GM12878 (cell line): ENCODE measurements at regions of chr1 and their contacts with region 1.

Region 1: DNA sequence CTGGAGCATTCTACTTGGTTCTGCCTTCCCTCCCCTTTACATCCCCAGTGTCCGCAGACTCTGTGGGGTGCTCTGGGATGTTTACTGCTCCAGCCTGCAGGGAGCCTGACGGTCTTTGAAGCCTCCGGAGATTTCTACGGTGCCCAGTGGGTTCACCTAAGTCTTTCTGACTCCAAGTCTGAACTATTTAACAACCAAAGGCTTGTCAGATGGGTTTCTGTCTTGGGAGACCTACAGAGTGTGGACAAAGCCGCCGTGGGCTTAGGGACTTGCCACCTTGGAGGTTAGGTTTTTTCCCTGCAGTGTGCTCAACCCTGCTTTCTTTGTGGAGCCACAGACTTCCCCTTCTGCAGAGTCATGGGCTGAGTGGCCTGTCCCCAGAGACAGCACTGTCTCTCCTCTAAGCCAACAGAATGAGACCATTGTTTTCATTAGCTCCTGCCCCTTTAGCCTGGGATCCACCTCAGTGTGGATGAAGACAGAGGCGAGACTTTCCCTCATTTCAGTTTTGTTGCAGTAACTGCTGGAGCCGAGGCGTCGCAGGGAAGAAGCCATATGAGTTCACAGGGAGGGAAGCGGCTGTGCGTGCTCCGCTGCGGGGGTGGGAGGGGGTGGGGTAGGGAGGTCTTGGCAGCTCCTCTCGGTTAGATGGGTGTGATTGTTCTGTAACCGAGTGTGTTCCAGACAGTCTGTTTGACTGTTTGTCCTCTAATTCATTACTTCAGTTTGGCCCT is 120.7 kb downstream of the CNIH3 start:
- DNase-seq: peak; percentile 93
- ATAC-seq: peak; percentile 61
- H3K4me3 ChIP-seq: no peak overlapping the region
- H3K27ac ChIP-seq: peak overlapping the region; percentile 49
- H3K4me1 ChIP-seq: peaks cover 77% of the 10 kb centered on the region
- H3K27me3 ChIP-seq: no peaks in the 10 kb centered on the region
- CTCF ChIP-seq: no peak
- EP300 ChIP-seq: peak; percentile 88 to 90; a peak in 3 of 4 replicates
- POLR2A ChIP-seq: no peak
- RAD21 ChIP-seq: no peak

Region 2: GRCh38 chr1:224447251-224447650 is 289.5 kb before region 1 on chr1:
- CTCF ChIA-PET with region 1: no interaction called
- POLR2A ChIA-PET with region 1: no interaction called
- RAD21 ChIA-PET with region 1: no interaction called
- SMC1A ChIA-PET with region 1: no interaction called
- in situ Hi-C with region 1: no loop called
- intact Hi-C with region 1: no loop called
- DNase-seq: no peak
- ATAC-seq: no peak
- H3K4me3 ChIP-seq: no peak overlapping the region
- H3K27ac ChIP-seq: no peak overlapping the region
- H3K4me1 ChIP-seq: no peaks in the 10 kb centered on the region
- H3K27me3 ChIP-seq: no peaks in the 10 kb centered on the region
- CTCF ChIP-seq: no peak
- EP300 ChIP-seq: no peak
- POLR2A ChIP-seq: no peak
- RAD21 ChIP-seq: no peak

Region 3: DNA sequence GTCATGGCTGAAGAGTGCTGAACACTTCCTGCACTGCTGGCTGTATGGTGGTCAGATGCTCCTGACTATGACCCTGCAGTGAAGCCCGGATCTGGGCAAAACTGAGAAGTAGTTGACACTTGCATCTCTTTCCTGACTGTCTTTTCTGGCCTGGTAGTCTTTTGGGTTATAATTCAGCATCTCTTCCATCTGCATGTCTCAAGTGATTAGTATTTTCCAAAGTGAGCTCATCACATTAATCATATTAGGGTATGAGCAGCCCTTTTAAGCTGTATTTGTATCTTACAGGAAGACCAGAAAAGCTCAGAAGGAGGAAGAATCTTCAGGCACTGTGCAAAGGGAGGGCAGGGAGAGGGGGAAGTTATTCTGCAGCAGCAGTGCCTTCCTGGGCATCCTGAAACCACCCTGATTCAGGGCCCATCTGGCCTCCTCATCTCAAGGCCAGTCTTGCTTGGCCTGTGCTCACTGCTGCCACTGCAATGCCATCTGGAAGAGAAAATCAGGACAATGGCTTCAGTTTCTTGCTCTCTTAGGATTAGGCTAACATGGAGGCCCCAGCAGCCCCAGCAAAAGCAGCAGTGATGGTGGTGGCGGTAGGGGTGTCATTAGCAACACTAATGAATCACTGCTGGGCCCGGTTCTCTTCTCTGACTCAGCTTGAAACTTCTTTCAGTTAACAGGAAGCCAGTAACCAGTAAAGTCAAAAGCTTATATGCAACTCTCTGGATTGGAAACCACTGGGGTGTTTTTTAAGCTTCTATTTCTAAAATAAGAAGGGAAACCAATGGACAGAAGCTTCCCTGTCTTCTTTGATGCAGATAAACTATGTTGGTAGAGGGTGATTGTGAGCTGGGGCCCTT is 238.8 kb before region 1 on chr1:
- CTCF ChIA-PET with region 1: interaction called, 6 read pairs
- POLR2A ChIA-PET with region 1: no interaction called
- RAD21 ChIA-PET with region 1: interaction called, 10 read pairs
- SMC1A ChIA-PET with region 1: interaction called, 5 read pairs
- in situ Hi-C with region 1: no loop called
- intact Hi-C with region 1: loop called (anchors 5 kb)
- DNase-seq: peak; percentile 80
- ATAC-seq: peak; percentile 98
- H3K4me3 ChIP-seq: peak overlapping the region; percentile 28; the same call in 1 of the 2 replicates
- H3K27ac ChIP-seq: peak overlapping the region; percentile 92
- H3K4me1 ChIP-seq: peaks cover 37% of the 10 kb centered on the region
- H3K27me3 ChIP-seq: no peaks in the 10 kb centered on the region
- CTCF ChIP-seq: no peak
- EP300 ChIP-seq: peak in 1 of 2 experiments; percentile 82; a peak in 2 of 4 replicates
- POLR2A ChIP-seq: peak; percentile 54
- RAD21 ChIP-seq: no peak

Region 4: GRCh38 chr1:224592636-224593582 is 143.9 kb before region 1 on chr1:
- CTCF ChIA-PET with region 1: no interaction called
- POLR2A ChIA-PET with region 1: no interaction called
- RAD21 ChIA-PET with region 1: no interaction called
- SMC1A ChIA-PET with region 1: no interaction called
- in situ Hi-C with region 1: no loop called
- intact Hi-C with region 1: no loop called
- DNase-seq: no peak
- ATAC-seq: peak; percentile 81
- H3K4me3 ChIP-seq: no peak overlapping the region
- H3K27ac ChIP-seq: no peak overlapping the region
- H3K4me1 ChIP-seq: no peaks in the 10 kb centered on the region
- H3K27me3 ChIP-seq: no peaks in the 10 kb centered on the region
- CTCF ChIP-seq: no peak
- EP300 ChIP-seq: no peak
- POLR2A ChIP-seq: no peak
- RAD21 ChIP-seq: no peak

Region 5: DNA sequence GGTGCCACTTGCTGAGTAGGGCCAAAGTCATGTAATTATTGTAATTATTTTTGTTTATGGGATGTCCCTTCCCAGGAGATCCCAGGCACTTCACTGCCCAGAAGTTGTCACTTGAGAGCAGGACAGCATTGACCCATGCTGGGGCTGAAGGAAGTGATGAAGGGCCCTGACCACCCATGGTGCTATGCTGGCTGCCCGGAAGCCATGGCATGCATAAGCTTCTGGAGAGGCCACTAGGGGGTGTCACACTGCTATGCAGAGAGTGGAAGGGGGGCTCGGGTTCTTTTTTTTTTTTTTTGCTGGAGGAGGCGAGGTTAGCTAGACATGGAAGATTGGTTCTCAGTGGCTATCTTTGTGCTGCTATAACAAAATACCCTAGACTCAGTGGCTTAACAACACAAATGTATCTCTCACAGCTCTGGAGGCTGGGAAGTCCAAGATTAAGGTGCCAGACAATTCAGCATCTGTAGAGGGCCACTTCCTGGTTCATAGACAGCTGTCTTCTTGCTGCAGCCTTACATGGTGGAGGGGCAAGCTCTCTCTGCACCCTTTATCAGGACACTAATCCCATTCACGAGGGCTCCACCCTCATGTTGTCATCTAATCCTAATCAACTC is 35.8 kb before region 1 on chr1:
- CTCF ChIA-PET with region 1: interaction called, 19 read pairs
- POLR2A ChIA-PET with region 1: no interaction called
- RAD21 ChIA-PET with region 1: interaction called, 19 read pairs
- SMC1A ChIA-PET with region 1: interaction called, 20 read pairs
- in situ Hi-C with region 1: no loop called
- intact Hi-C with region 1: no loop called
- DNase-seq: peak; percentile 9
- ATAC-seq: peak; percentile 89
- H3K4me3 ChIP-seq: no peak overlapping the region
- H3K27ac ChIP-seq: no peak overlapping the region
- H3K4me1 ChIP-seq: no peaks in the 10 kb centered on the region
- H3K27me3 ChIP-seq: no peaks in the 10 kb centered on the region
- CTCF ChIP-seq: peak; percentile 36 to 65 (median 54)
- EP300 ChIP-seq: no peak
- POLR2A ChIP-seq: no peak
- RAD21 ChIP-seq: peak; percentile 92

Region 6: GRCh38 chr1:224753491-224753890 is 16.7 kb after region 1 on chr1:
- CTCF ChIA-PET with region 1: interaction called, 28 read pairs
- POLR2A ChIA-PET with region 1: interaction called, 34 read pairs
- RAD21 ChIA-PET with region 1: interaction called, 174 read pairs
- SMC1A ChIA-PET with region 1: interaction called, 135 read pairs
- in situ Hi-C with region 1: no loop called
- intact Hi-C with region 1: no loop called
- DNase-seq: no peak
- ATAC-seq: peak; percentile 43
- H3K4me3 ChIP-seq: no peak overlapping the region
- H3K27ac ChIP-seq: no peak overlapping the region
- H3K4me1 ChIP-seq: peaks cover 34% of the 10 kb centered on the region
- H3K27me3 ChIP-seq: no peaks in the 10 kb centered on the region
- CTCF ChIP-seq: no peak
- EP300 ChIP-seq: no peak
- POLR2A ChIP-seq: no peak
- RAD21 ChIP-seq: no peak

Region 7: DNA sequence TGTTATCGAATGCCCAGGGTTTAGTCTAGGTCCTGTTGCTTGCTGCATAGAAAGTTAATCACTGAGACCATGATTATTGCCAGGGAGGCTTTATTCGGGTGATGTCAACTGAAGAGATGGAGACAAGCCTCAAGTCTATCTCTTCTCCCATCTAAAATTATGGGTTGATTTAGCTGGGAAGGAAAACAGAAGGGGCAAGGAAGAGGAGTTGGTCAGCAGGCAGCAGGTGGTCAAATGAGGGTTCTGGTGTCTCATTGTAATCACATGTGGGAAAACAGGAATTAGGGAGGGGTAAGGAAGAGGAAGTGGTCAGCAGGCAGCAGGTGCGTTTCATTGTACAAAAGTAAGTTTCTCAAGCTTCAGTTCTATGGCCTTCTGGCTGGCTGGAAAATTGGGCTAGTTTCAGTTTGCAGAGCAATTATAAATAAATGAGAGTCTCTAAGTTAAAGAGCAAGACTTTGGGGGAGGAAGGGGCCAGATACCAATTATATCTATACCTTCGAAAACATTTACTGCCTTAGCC is 46.4 kb after region 1 on chr1:
- CTCF ChIA-PET with region 1: interaction called, 15 read pairs
- POLR2A ChIA-PET with region 1: interaction called, 22 read pairs
- RAD21 ChIA-PET with region 1: interaction called, 78 read pairs
- SMC1A ChIA-PET with region 1: interaction called, 125 read pairs
- in situ Hi-C with region 1: no loop called
- intact Hi-C with region 1: loop called (anchors 1 kb)
- DNase-seq: peak; percentile 72
- ATAC-seq: peak; percentile 71
- H3K4me3 ChIP-seq: no peak overlapping the region
- H3K27ac ChIP-seq: peak overlapping the region; percentile 55
- H3K4me1 ChIP-seq: peaks cover 25% of the 10 kb centered on the region
- H3K27me3 ChIP-seq: no peaks in the 10 kb centered on the region
- CTCF ChIP-seq: no peak
- EP300 ChIP-seq: peak; percentile 47 to 60; a peak in 2 of 4 replicates
- POLR2A ChIP-seq: no peak
- RAD21 ChIP-seq: no peak

Region 8: GRCh38 chr1:224959115-224959514 is 222.3 kb after region 1 on chr1:
- CTCF ChIA-PET with region 1: no interaction called
- POLR2A ChIA-PET with region 1: no interaction called
- RAD21 ChIA-PET with region 1: no interaction called
- SMC1A ChIA-PET with region 1: no interaction called
- in situ Hi-C with region 1: no loop called
- intact Hi-C with region 1: no loop called
- DNase-seq: no peak
- ATAC-seq: no peak
- H3K4me3 ChIP-seq: no peak overlapping the region
- H3K27ac ChIP-seq: no peak overlapping the region
- H3K4me1 ChIP-seq: no peaks in the 10 kb centered on the region
- H3K27me3 ChIP-seq: no peaks in the 10 kb centered on the region
- CTCF ChIP-seq: no peak
- EP300 ChIP-seq: no peak
- POLR2A ChIP-seq: no peak
- RAD21 ChIP-seq: no peak